CD8-positive, alpha-beta memory T cell (primary cell): ENCODE measurements at regions of chr3 and their contacts with region 1.

Region 1: DNA sequence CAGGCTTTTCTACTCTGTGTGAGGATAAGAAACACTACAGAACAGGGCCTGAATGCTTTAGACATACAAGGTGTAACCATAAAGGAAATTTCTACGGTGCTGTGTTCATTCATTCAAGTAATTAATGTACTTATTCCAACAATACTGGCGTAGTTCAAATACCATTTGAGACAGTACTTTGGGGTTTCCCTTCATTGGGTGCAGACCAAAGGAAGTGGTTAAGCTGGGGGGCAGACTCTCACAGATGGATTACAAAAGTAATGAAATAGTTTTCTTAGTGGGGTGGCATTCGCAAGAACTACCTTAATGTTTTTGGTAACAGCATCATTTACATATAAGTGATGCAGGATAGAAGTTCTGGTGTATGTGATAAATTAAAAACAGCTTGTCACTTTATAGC is 65.9 kb downstream of the BTD start:
- DNase-seq: peak; percentile 29 to 72 (median 38)
- H3K4me3 ChIP-seq: peak overlapping the region; percentile 7
- H3K4me3 Mint-ChIP-seq: peak overlapping the region in 4 of 7 donors; percentile 6 to 46 (median 40)
- H3K27ac ChIP-seq: no peak overlapping the region
- H3K27ac Mint-ChIP-seq: peak overlapping the region in 5 of 8 donors; percentile 32 to 72 (median 64)
- H3K4me1 ChIP-seq: peaks cover 18% of the 10 kb centered on the region
- H3K4me1 Mint-ChIP-seq: peaks cover 19 to 32% (median 26%) of the 10 kb centered on the region in 3 donors
- H3K27me3 ChIP-seq: no peaks in the 10 kb centered on the region
- H3K27me3 Mint-ChIP-seq: no peaks in the 10 kb centered on the region

Region 2: GRCh38 chr3:15629860-15630597 is 37.5 kb before region 1 on chr3:
- CTCF ChIA-PET with region 1: interaction called, 13 read pairs
- POLR2A ChIA-PET with region 1: no interaction called
- DNase-seq: peak; percentile 35 to 75 (median 52)
- H3K4me3 ChIP-seq: peak overlapping the region; percentile 7
- H3K4me3 Mint-ChIP-seq: peak overlapping the region in 6 of 7 donors; percentile 6 to 70 (median 34)
- H3K27ac ChIP-seq: no peak overlapping the region
- H3K27ac Mint-ChIP-seq: peak overlapping the region in 4 of 8 donors; percentile 1 to 77 (median 47)
- H3K4me1 ChIP-seq: peaks cover 12% of the 10 kb centered on the region
- H3K4me1 Mint-ChIP-seq: peaks cover 18 to 39% (median 33%) of the 10 kb centered on the region in 3 donors
- H3K27me3 ChIP-seq: no peaks in the 10 kb centered on the region
- H3K27me3 Mint-ChIP-seq: no peaks in the 10 kb centered on the region

Region 3: GRCh38 chr3:15693355-15693754 is 25.9 kb after region 1 on chr3:
- CTCF ChIA-PET with region 1: no interaction called
- POLR2A ChIA-PET with region 1: no interaction called
- DNase-seq: no peak
- H3K4me3 ChIP-seq: no peak overlapping the region
- H3K4me3 Mint-ChIP-seq: no peak overlapping the region
- H3K27ac ChIP-seq: no peak overlapping the region
- H3K27ac Mint-ChIP-seq: peak overlapping the region in 1 of 8 donors; percentile 56
- H3K4me1 ChIP-seq: no peaks in the 10 kb centered on the region
- H3K4me1 Mint-ChIP-seq: peaks cover 0 to 9% (median 0%) of the 10 kb centered on the region in 3 donors
- H3K27me3 ChIP-seq: no peaks in the 10 kb centered on the region
- H3K27me3 Mint-ChIP-seq: no peaks in the 10 kb centered on the region

Region 4: GRCh38 chr3:15783361-15783969 is 116.0 kb after region 1 on chr3:
- CTCF ChIA-PET with region 1: no interaction called
- POLR2A ChIA-PET with region 1: no interaction called
- DNase-seq: no peak
- H3K4me3 ChIP-seq: no peak overlapping the region
- H3K4me3 Mint-ChIP-seq: no peak overlapping the region
- H3K27ac ChIP-seq: no peak overlapping the region
- H3K27ac Mint-ChIP-seq: peak overlapping the region in 2 of 8 donors; percentile 9 to 43
- H3K4me1 ChIP-seq: no peaks in the 10 kb centered on the region
- H3K4me1 Mint-ChIP-seq: peaks cover 22 to 67% (median 59%) of the 10 kb centered on the region in 3 donors
- H3K27me3 ChIP-seq: no peaks in the 10 kb centered on the region
- H3K27me3 Mint-ChIP-seq: no peaks in the 10 kb centered on the region